Astrocyte of the cerebellum (primary cell): ENCODE measurements at regions of chr15 and their contacts with region 1.

Region 1: DNA sequence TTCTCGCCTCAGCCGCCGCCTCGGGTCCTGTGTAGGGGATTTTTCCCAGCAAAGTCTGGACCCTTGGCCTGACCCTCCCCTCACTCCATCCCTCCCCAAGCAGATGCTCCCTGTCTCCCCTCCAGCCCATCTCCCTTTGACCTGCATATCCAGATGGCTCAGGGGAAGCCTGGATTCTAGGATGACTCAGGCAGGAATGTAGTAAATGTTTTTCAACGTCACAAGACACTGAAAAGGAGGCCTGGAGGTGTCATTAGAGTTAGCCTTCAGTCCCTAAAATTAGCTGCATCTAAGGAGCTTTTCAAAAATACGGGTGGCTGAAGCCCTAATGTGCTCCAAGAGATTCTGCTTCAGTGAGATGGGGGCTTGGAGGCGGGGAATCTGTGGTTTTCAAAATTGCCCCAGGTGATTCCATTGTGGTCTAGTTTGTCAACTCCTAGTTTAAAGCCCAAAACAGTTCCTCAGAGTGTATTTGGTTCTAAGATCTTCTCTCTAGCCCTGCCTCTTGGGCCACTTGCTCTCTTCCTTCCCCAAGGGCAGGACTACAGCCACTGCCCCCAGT is 7.3 kb downstream of the ACAN start:
- DNase-seq: no peak
- H3K4me3 ChIP-seq: no peak overlapping the region
- CTCF ChIP-seq: no peak

Region 2: GRCh38 chr15:88769161-88769971 is 41.1 kb before region 1 on chr15:
- in situ Hi-C with region 1: loop called (anchors 5 kb)
- DNase-seq: no peak
- H3K4me3 ChIP-seq: no peak overlapping the region
- CTCF ChIP-seq: no peak

Region 3: DNA sequence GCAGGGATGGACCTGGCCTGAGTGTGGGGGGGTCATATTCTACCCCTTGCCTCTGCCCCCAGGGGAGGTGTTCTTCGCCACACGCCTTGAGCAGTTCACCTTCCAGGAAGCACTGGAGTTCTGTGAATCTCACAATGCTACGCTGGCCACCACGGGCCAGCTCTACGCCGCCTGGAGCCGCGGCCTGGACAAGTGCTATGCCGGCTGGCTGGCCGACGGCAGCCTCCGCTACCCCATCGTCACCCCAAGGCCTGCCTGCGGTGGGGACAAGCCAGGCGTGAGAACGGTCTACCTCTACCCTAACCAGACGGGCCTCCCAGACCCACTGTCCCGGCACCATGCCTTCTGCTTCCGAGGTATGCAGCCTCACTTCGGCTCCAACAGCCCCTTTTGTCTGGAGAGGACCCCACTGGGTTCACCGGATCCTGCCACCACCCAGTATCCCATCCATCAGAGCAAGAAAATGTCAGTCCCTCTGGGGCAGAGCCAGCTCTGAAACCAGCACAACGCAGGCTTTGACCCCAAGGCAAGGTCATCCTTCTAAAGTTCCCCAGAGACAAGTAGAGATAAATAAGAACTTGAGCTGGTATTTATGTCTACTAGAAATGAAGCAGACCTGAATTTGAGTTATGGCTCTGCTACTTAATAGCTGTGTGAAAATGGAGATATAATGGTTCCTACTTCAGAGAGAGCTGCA is 39.0 kb after region 1 on chr15:
- in situ Hi-C with region 1: no loop called
- DNase-seq: no peak
- H3K4me3 ChIP-seq: no peak overlapping the region
- CTCF ChIP-seq: no peak